ENCODE measurements at regions of chr3 and their contacts with region 1.

Region 1: DNA sequence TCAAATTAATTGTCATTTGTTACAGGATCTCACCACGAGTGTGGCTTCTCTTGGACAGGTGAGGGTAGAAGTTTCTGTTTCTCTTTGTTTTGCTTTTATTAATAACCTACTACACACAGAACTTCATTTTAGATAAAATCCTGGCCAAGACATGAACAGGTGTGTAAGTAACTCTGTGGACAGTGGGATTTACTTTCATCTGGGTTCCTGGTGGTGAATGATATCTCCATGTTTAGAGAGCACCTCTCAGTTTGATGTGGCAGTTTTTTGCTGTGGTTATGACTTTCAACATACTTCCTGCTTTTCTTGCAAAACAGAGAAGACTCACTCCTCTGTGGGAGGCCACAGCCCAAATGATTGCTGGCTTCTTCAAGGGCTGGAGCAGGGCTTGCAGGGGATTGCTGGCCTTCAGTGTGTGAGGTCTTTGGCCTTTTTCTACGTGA is 71.1 kb upstream of the XCR1 start:
- DNase-seq: peak; percentile 60
- H3K4me3 Mint-ChIP-seq: peak overlapping the region; percentile 55
- H3K27ac Mint-ChIP-seq: peak overlapping the region; percentile 91
- H3K4me1 Mint-ChIP-seq: peaks cover 43% of the 10 kb centered on the region
- H3K27me3 Mint-ChIP-seq: peaks cover 27% of the 10 kb centered on the region

Region 2: DNA sequence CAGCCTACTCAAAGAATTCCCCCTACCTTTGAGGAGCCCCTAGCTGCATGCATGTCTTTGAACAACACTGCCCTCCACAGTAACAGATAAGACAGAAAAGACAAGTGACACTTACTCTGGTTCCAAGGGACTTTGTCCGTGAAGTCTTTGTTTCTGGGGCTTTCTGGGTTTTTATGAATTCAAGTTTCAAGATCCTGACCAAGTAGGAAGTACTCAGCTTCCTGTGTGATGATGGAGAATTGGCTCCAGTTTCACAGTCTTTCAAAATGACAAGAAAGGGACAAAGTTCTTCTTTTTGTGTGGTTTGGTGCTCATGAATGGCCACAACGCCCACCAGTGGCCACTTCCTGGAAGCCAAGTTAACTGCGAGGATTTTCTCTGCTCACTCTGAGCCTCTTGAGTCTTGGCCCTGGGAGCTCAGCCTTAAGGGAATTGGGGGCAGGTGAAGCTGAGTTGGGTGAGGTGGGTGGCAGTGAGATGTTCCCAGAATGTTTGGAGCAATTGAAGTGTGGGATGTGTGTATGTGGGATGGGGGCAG is 109.9 kb after region 1 on chr3 and contains the start of gene CCR1:
- intact Hi-C with region 1: loop called (anchors 1 kb)
- DNase-seq: peak; percentile 44
- H3K4me3 Mint-ChIP-seq: no peak within 1 kb of the TSS
- H3K27ac Mint-ChIP-seq: peak within 1 kb of the TSS; percentile 18
- H3K4me1 Mint-ChIP-seq: peaks cover 25% of the 10 kb centered on the region
- H3K27me3 Mint-ChIP-seq: peaks cover 31% of the 10 kb centered on the region
- total RNA-seq, gene CCR1: 0.41 and 0.51 TPM in 2 replicates

Region 3: DNA sequence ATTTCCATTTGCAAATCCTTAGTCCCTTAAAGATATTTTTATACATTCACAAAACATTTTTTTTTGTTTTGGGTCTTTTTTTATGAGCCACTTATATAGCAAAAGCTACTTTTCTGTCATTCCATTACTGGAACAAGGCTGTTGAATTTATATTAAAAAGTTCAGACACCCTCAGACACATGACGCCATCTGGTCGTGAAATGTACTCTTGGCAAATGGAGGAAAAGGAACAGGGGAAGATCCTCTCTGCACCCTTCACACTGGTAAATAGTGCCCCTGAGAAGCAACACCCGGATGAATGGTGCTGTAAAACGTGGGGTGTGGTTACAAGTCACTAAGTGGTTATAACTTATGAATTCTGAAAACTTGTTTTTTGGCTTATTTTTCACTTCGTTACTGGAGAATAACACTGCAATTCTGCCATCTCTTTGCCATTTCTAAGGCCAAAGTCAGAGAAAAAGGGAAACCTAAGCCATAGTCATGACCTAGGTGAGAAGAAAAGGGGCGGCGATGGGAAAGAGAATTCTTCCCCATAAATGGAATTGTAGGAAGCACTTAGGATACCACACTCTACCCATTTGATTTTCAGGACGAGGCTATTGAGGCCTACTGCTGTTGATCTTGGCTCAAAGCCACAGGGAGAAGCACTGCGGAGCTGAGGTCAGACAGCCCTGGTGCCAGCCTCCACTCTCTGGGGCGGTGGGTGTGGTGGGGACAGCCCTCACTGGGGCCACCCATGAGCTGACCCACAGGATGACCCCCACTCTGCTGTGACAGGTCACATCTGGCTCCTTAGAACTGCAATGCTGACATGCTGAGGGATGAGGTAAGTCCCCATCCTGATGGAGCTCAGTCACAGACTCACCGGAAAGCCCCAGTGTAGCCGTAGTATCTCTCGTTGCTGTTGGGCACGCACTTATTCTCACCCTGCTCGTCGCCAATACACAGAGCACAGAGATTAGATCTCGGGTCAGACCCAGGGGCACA is 344.5 kb after region 1 on chr3:
- intact Hi-C with region 1: loop called (anchors 2 kb)
- DNase-seq: peak; percentile 14
- H3K4me3 Mint-ChIP-seq: no peak overlapping the region
- H3K27ac Mint-ChIP-seq: no peak overlapping the region
- H3K4me1 Mint-ChIP-seq: peaks cover 18% of the 10 kb centered on the region
- H3K27me3 Mint-ChIP-seq: peaks cover 10% of the 10 kb centered on the region

Measured in activated T-helper 2 cell treated with anti-CD3 and anti-CD28 coated beads, Interferon-gamma antibody, Interleukin-2, Interleukin-4, amounts not matched to agents 10 μg/mL and 5 μg/mL and 100 μg/mL, durations not matched to agents 14 hours and 24 hours and 36 hours (primary cell).